ENCODE measurements at regions of chr3 and their contacts with region 1.

Region 1: GRCh38 chr3:161423911-161424522 is 52.7 kb upstream of the SPTSSB start:
- DNase-seq: no peak
- ATAC-seq: no peak
- H3K4me3 ChIP-seq: no peak overlapping the region
- H3K27ac ChIP-seq: no peak overlapping the region
- H3K4me1 ChIP-seq: no peaks in the 10 kb centered on the region
- H3K27me3 ChIP-seq: no peaks in the 10 kb centered on the region

Region 2: DNA sequence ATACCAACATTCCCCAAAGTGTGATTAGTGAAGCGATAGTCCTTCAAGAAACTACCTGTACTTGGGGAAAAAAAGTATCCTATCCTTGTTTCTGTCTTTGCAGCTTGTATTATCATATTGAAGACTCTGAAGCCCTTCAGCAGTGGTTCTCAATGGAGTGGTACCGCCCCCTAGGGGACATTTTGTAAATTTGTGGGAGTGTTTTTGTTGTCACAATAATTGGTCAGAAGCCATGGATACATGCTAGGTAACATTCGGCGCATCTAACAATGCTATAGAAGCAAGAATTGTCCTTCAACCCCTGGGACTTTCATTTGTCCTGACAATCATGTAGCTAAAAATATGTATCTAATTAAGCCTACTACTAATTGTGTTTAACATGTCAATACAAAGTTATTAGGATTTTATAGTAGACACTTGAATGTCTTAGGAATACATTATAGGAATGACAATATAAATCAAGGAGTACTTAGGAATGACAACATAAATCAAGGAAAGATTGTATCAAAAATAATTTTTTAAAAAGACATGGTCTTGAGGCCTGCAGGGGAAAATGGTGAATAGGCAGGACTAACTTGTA is 149.2 kb before region 1 on chr3:
- intact Hi-C with region 1: loop called (anchors 2 kb)
- DNase-seq: no peak
- ATAC-seq: no peak
- H3K4me3 ChIP-seq: no peak overlapping the region
- H3K27ac ChIP-seq: no peak overlapping the region
- H3K4me1 ChIP-seq: no peaks in the 10 kb centered on the region
- H3K27me3 ChIP-seq: no peaks in the 10 kb centered on the region

Measured in aorta (tissue), 5 donors.